PC-9 (cell line): ENCODE measurements at regions of chr4 and their contacts with region 1.

Region 1: GRCh38 chr4:162163852-162164759 is at the start of gene FSTL5:
- DNase-seq: peak; percentile 53 to 79
- H3K4me3 ChIP-seq: peak within 1 kb of the TSS; percentile 63
- H3K27ac ChIP-seq: no peak within 1 kb of the TSS
- H3K4me1 ChIP-seq: peaks cover 10% of the 10 kb centered on the region; the same call in 1 of the 2 replicates
- H3K27me3 ChIP-seq: no peaks in the 10 kb centered on the region
- CTCF ChIP-seq: no peak
- total RNA-seq, gene FSTL5: 23.0 and 29.4 TPM in 2 replicates

Region 2: DNA sequence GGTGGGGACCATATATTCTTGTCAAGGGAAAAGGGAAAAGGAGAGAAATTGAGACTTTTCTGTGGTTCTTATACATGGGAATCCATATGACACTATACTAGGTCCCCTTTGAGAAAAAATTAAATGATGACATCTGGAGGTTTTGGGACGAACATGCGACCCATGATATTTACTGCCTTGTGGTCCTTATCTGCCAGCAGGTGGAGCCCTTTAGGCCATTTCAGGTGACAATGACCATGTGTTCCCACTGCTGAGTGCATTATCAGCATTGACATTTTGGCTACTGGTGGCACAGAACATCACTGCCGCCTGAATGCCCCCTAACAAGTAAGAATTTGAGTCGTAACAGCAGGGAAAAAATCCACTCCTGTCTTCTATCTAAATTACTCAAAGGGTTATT is 843.7 kb before region 1 on chr4:
- CTCF ChIA-PET with region 1: no interaction called
- POLR2A ChIA-PET with region 1: no interaction called
- intact Hi-C with region 1: loop called (anchors 5 kb)
- DNase-seq: peak in 1 of 2 experiments; percentile 8
- H3K4me3 ChIP-seq: no peak overlapping the region
- H3K27ac ChIP-seq: no peak overlapping the region
- H3K4me1 ChIP-seq: no peaks in the 10 kb centered on the region
- H3K27me3 ChIP-seq: no peaks in the 10 kb centered on the region
- CTCF ChIP-seq: peak; percentile 55

Region 3: GRCh38 chr4:161564230-161564834 is 599.8 kb before region 1 on chr4:
- CTCF ChIA-PET with region 1: no interaction called
- POLR2A ChIA-PET with region 1: no interaction called
- intact Hi-C with region 1: loop called (anchors 10 kb)
- DNase-seq: no peak
- H3K4me3 ChIP-seq: no peak overlapping the region
- H3K27ac ChIP-seq: no peak overlapping the region
- H3K4me1 ChIP-seq: no peaks in the 10 kb centered on the region
- H3K27me3 ChIP-seq: no peaks in the 10 kb centered on the region
- CTCF ChIP-seq: peak; percentile 45

Region 4: DNA sequence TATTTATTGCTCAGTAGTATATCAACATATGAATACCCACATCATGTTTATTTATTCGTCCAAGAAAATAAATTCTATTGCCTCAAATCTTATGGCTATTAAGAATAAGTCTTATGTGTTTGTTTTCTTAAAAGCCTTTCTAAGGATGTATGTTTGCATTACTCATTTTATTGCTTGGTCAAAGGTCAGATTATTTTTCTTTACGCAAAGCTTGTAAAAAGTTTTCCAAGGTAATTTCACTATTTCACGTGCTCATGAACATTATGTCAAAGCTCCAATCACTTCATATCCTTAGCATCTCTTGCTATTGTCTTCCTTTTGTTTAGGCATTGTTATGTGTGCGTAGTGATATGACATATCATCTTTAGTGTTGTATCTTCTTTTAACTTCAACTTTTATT is 258.2 kb after region 1 on chr4:
- CTCF ChIA-PET with region 1: no interaction called
- POLR2A ChIA-PET with region 1: no interaction called
- intact Hi-C with region 1: no loop called
- DNase-seq: no peak
- H3K4me3 ChIP-seq: no peak overlapping the region
- H3K27ac ChIP-seq: no peak overlapping the region
- H3K4me1 ChIP-seq: no peaks in the 10 kb centered on the region
- H3K27me3 ChIP-seq: no peaks in the 10 kb centered on the region
- CTCF ChIP-seq: no peak

Region 5: DNA sequence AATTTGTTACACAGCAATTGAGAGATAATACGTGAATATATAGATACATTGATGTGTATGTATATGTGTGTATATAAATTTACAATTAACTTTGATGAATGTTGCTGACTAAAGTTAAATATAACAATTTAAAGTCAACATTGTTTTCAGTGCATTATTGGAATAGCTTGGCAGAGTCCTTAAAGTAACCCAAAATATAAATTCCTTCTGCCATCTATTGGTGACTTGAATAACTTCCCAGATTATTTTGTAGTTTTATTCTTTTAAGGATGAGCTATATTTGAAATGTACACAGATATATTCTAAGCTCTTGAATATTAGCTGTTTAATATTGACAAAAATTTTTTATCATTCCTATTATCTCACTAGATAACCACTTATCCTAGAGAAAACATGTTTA is 297.8 kb after region 1 on chr4:
- CTCF ChIA-PET with region 1: no interaction called
- POLR2A ChIA-PET with region 1: no interaction called
- intact Hi-C with region 1: loop called (anchors 10 kb)
- DNase-seq: no peak
- H3K4me3 ChIP-seq: no peak overlapping the region
- H3K27ac ChIP-seq: no peak overlapping the region
- H3K4me1 ChIP-seq: no peaks in the 10 kb centered on the region
- H3K27me3 ChIP-seq: no peaks in the 10 kb centered on the region
- CTCF ChIP-seq: peak; percentile 46